ENCODE measurements at regions of chr22 and their contacts with region 1.

Region 1: DNA sequence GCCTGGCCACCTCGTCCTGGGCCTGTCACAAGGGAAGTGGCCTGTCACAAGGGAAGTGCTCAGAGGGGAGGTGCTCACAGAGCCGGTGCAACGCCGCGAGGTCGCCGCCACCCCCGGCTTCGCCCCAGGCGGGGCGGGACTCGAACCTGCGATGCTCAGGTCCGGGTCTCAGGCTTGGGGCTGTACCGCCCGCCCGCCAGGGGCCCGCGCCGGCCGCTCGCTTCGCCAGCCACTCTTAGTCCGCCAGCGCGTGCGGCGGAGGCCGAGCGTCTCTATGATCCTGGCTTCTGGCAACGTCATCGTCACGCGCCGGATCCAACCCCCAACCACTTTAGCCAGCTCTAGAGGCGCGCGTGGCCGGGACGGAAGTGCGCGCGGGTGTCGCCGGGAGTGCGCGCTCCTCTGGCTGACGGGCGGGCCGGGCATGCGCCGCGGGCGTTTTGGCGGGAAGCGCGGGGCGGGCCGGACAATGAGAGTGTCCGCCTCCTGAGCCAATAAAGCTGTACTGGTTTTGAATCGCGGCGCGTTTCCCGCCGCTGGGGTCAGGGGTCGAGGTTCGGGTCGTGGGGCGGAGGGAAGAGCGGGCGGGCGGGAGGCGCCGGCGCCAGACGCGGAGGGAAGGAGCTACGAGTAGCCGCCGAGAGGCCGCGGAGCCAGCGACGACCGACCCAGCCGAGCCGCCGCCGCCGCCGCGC is at the start of gene TRMT2A:
- DNase-seq: peak; percentile 99
- H3K4me3 ChIP-seq: peak within 1 kb of the TSS; percentile 98
- H3K27ac ChIP-seq: peak within 1 kb of the TSS; percentile 74
- H3K4me1 ChIP-seq: peaks cover 31% of the 10 kb centered on the region
- CTCF ChIP-seq: peak; percentile 54
- total RNA-seq, gene TRMT2A: 118 and 126 TPM in 2 replicates

Region 2: DNA sequence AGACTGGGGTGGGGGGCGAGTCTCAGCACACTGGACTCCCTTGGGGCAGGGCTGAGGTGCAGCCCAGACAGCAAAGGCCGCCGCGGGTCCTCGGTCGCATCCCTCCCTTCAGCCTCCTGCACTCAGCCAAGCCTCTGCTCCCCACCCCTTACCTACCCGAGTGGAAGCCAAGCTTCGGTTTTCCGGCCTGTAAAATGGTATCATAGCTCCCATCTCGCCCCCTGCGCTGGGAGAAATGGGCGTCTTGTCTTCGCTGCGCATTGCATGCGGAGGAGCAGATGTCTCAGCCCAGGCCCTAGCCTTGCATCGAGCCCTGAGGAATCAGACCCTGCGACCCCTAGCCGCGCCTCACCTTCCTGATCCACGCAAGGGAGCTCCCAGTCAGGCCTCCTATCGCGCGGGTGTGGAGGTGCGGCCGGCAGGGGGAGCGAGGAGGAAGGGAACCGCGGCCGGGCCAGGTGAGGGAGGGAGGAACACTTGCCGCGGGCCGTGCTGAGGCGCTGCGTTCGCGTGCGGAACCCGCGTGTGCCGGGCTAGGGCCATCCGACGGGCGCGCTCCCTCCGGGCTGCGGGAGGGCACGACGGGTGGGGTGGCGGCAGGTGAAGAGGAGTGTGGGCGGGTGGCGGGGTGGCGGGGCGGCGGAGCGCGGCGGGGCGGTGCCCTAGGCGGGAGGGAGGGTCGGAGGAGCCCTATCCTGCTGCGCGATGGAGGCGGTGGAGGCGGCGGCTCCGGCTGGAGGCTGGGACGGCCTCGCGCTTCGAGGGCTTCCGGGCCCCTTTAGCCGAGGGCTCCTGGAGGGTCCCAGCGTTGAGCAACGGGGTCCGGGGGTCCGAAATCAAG is 360.6 kb before region 1 on chr22:
- CTCF ChIA-PET with region 1: no interaction called
- POLR2A ChIA-PET with region 1: no interaction called
- intact Hi-C with region 1: no loop called
- DNase-seq: peak; percentile 68
- H3K4me3 ChIP-seq: peak overlapping the region; percentile 3
- H3K27ac ChIP-seq: no peak overlapping the region
- H3K4me1 ChIP-seq: peaks cover 24% of the 10 kb centered on the region
- CTCF ChIP-seq: peak; percentile 75

Region 3: DNA sequence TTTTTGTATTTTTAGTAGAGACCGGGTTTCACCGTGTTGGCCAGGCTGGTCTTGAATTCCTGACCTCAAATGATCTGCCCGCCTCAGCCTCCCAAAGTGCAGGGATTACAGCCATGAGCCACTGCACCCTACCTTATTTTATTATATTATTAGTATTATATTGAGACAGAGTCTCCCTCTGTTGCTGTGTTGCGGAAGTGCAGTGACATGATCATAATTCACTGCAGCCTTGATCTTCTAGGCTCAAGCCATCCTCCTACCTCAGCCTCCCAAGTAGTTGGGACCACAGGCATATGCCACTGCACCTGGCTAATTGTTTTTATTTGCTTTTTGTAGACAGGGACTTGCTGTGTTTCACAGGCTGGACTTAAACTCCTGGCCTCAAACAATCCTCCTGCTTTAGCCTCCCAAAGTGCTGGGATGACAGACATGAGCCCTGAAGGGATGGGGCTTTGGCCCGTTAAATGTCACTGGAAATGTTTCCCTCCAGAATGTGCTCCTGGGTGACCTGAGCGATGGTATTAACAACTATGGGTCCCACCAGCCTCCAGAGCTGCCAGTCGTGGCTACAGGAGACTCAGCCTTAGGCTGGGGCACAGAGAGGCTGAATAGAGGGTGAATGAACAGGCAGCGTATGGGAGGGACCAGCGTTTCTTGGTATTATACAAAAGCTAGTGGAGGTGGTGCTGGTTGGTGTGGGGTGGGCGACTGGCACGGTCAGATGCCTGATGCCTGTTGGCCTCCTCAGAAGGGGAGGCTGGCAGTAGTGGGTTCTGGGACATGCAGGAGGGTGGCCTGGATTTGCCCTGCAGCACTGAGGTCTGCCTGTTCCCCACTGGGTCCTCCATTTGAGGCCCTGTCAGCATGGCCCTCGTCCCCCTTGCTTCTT is 88.9 kb before region 1 on chr22:
- CTCF ChIA-PET with region 1: no interaction called
- POLR2A ChIA-PET with region 1: no interaction called
- intact Hi-C with region 1: loop called (anchors 1 kb)
- DNase-seq: peak; percentile 52
- H3K4me3 ChIP-seq: no peak overlapping the region
- H3K27ac ChIP-seq: no peak overlapping the region
- H3K4me1 ChIP-seq: peaks cover 22% of the 10 kb centered on the region
- CTCF ChIP-seq: peak; percentile 67

Region 4: DNA sequence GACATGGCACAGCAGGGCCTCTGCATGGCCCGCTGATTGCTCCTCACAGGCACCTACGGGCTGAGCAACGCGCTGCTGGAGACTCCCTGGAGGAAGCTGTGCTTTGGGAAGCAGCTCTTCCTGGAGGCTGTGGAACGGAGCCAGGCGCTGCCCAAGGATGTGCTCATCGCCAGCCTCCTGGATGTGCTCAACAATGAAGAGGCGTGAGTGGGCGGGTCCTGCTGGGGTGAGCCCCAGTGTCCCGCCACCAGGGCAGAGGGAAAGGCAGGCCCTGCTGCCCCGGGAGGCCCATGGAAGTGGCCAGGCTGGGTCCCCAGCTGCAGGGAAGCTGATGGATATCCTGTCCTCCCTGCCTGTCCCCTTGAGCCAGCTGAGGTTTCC is 55.6 kb before region 1 on chr22:
- CTCF ChIA-PET with region 1: no interaction called
- POLR2A ChIA-PET with region 1: no interaction called
- intact Hi-C with region 1: no loop called
- DNase-seq: no peak
- H3K4me3 ChIP-seq: no peak overlapping the region
- H3K27ac ChIP-seq: no peak overlapping the region
- H3K4me1 ChIP-seq: no peaks in the 10 kb centered on the region
- CTCF ChIP-seq: no peak

Region 5: GRCh38 chr22:20137671-20138416 is 20.7 kb after region 1 on chr22:
- CTCF ChIA-PET with region 1: no interaction called
- POLR2A ChIA-PET with region 1: no interaction called
- intact Hi-C with region 1: no loop called
- DNase-seq: no peak
- H3K4me3 ChIP-seq: no peak overlapping the region
- H3K27ac ChIP-seq: no peak overlapping the region
- H3K4me1 ChIP-seq: peaks cover 12% of the 10 kb centered on the region
- CTCF ChIP-seq: no peak

Region 6: GRCh38 chr22:20490183-20490940 is 373.3 kb after region 1 on chr22:
- CTCF ChIA-PET with region 1: no interaction called
- POLR2A ChIA-PET with region 1: no interaction called
- intact Hi-C with region 1: no loop called
- DNase-seq: no peak
- H3K4me3 ChIP-seq: no peak overlapping the region
- H3K27ac ChIP-seq: no peak overlapping the region
- H3K4me1 ChIP-seq: peaks cover 10% of the 10 kb centered on the region
- CTCF ChIP-seq: no peak